ENCODE measurements at regions of chr14 and their contacts with region 1.

Region 1: GRCh38 chr14:76456200-76456599 is 80.3 kb downstream of the ESRRB start:
- DNase-seq: peak; percentile 65
- ATAC-seq: peak; percentile 36
- H3K4me3 Mint-ChIP-seq: no peak overlapping the region
- H3K27ac Mint-ChIP-seq: no peak overlapping the region
- H3K4me1 Mint-ChIP-seq: no peaks in the 10 kb centered on the region
- H3K27me3 Mint-ChIP-seq: peaks cover 12% of the 10 kb centered on the region

Region 2: DNA sequence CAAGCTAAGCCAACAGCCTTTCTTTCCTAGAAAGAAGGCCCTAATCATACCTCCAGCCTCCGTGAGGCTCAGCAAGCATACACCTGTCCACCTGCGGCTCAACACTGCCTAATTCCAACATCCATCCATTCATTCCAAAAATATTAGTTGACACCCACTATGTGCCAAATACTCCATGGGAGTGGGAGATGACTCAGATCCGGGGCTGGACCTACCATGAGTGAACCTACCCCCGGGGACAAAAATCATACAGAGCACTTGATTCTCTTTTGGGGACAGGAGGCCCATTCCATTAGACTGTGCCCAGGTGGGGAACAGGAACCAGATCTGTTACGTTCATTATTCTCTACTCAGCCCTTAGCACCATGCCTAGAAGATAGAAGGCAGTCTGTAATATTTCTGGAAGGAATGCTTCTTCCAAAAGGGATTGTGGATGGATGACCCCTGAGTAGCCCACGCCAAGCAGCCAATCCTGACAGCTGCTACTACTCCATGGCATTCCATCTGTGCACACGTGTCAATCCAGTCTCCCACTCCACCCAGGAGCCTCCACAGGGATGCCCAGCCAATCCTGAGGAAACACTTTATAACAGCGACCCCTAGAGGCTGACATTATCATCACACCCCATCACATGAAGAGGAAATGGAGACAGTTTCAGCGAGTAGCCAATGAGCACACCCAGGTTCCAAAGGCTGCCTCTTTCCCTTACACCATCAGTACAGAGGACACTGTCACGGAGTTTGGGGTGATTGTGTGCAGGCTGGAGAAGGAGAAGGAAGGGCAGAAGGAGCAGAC is 90.4 kb after region 1 on chr14:
- CTCF ChIA-PET with region 1: no interaction called
- POLR2A ChIA-PET with region 1: no interaction called
- intact Hi-C with region 1: loop called in 1 of 2 experiments (anchors 2 kb)
- DNase-seq: peak; percentile 38
- ATAC-seq: peak; percentile 64
- H3K4me3 Mint-ChIP-seq: no peak overlapping the region
- H3K27ac Mint-ChIP-seq: no peak overlapping the region
- H3K4me1 Mint-ChIP-seq: no peaks in the 10 kb centered on the region
- H3K27me3 Mint-ChIP-seq: peaks cover 7% of the 10 kb centered on the region

Region 3: DNA sequence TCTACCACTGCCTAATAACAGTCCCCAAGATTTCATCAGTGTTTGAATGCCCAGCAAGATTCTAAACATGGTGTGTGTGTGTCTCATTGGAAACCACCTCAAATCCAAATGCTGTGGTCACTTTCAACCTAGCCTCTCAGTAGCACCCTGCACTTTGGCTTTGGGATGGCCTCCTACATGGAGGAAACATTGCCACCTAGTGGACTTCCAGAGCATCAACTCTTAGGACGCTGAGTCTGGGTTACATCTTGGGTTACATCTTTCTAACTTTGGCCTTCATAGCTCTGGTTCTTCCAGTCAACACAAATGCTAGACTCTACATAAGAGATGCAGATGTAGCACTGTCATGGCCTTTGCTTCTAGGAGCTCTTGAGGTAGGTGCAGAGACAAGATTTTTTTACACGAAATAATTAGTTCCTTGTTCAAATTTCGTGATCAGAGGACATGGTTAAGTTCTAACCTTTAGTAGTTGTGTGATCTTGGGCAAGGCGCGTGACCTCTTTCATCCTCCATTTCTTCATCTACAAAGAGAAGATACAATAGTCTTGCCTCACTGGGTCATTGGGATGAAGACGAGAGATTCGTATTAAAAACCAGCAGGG is 191.6 kb after region 1 on chr14:
- CTCF ChIA-PET with region 1: interaction called, 8 read pairs
- POLR2A ChIA-PET with region 1: no interaction called
- intact Hi-C with region 1: loop called (anchors 1 kb)
- DNase-seq: peak; percentile 37
- ATAC-seq: peak; percentile 53
- H3K4me3 Mint-ChIP-seq: no peak overlapping the region
- H3K27ac Mint-ChIP-seq: no peak overlapping the region
- H3K4me1 Mint-ChIP-seq: no peaks in the 10 kb centered on the region
- H3K27me3 Mint-ChIP-seq: peaks cover 4% of the 10 kb centered on the region

Measured in activated CD4-positive, alpha-beta T cell treated with anti-CD3 and anti-CD28 coated beads for 36 hours (primary cell).